Dorsolateral prefrontal cortex (tissue), 120 donors: ENCODE measurements at regions of chr19 and their contacts with region 1.

Region 1: GRCh38 chr19:50933640-50934039 is 19.2 kb downstream of the KLK5 start:
- DNase-seq: no peak
- H3K4me3 ChIP-seq: no peak overlapping the region
- H3K27ac ChIP-seq: no peak overlapping the region
- H3K27me3 ChIP-seq: peaks cover 0 to 39% (median 9%) of the 10 kb centered on the region in 45 donors
- CTCF ChIP-seq: no peak

Region 2: GRCh38 chr19:51016798-51017683 is 83.4 kb after region 1 on chr19:
- intact Hi-C with region 1: loop called (anchors 2 kb)
- DNase-seq: peak in 9 of 10 donors; percentile 42 to 85 (median 80)
- H3K4me3 ChIP-seq: peak overlapping the region; percentile 5 to 72 (median 51)
- H3K27ac ChIP-seq: peak overlapping the region in 1 of 59 donors; percentile 52
- H3K27me3 ChIP-seq: peaks cover 0 to 69% (median 37%) of the 10 kb centered on the region in 45 donors
- CTCF ChIP-seq: peak; percentile 25 to 97 (median 84)

Region 3: GRCh38 chr19:51097166-51097738 is 163.6 kb after region 1 on chr19:
- intact Hi-C with region 1: loop called (anchors 2 to 5 kb)
- DNase-seq: peak; percentile 48 to 72 (median 56)
- H3K4me3 ChIP-seq: no peak overlapping the region
- H3K27ac ChIP-seq: no peak overlapping the region
- H3K27me3 ChIP-seq: no peaks in the 10 kb centered on the region
- CTCF ChIP-seq: peak in 55 of 56 donors; percentile 36 to 71 (median 61)